Psoas muscle (tissue), 8 donors: ENCODE measurements at regions of chr1 and their contacts with region 1.

Region 1: DNA sequence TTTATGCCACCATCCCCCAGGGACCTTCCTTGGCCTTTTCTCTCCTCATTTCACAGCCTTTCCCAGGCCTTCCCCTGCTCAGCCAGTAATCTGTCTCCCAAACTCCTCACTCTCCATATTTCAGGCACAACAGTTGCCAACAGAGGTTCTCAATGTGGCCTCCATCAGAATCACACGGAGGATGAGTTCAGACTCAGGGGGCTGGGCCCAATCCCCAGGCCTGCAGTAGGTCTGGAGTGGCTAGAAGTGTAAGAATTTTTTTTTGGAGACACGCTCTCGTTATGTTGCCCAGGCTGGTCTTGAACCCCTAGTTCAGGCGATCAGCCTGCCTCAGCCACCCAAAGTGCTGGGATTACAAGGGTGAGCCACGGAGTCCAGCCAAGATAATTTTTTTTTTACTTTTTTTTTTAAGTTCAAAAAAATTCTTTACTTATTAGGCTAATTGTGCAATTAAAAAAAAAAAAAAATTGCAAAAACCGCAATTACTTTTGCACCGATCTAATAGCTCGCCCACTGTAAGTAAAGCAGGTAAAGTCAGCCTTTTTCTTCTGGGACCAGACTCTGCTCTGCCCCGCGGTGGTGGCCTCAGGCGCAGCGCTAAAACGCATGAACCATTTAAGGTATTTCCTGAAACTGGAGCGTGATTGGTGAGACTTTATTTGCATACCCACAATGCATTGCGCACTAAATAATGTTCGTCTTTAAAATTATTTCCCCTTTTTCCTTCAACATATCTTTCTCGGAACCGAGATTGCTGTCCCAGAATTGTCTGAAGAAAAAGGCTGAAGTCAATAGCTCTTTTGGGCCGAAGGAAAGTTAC is 18.7 kb downstream of the KIAA2013 start:
- DNase-seq: peak; percentile 89 to 96
- ATAC-seq: peak; percentile 82 to 90 (median 85)
- H3K4me3 ChIP-seq: peak overlapping the region; percentile 80
- H3K27ac ChIP-seq: peak overlapping the region; percentile 95
- H3K4me1 ChIP-seq: no peaks in the 10 kb centered on the region
- H3K27me3 ChIP-seq: no peaks in the 10 kb centered on the region
- CTCF ChIP-seq: peak; percentile 80

Region 2: GRCh38 chr1:11886986-11887665 is 20.4 kb before region 1 on chr1:
- intact Hi-C with region 1: loop called in 1 of 2 experiments (anchors 2 kb)
- DNase-seq: peak; percentile 51 to 76
- ATAC-seq: peak in 3 of 4 donors; percentile 33 to 66 (median 61)
- H3K4me3 ChIP-seq: no peak overlapping the region
- H3K27ac ChIP-seq: no peak overlapping the region
- H3K4me1 ChIP-seq: peaks cover 24% of the 10 kb centered on the region
- H3K27me3 ChIP-seq: no peaks in the 10 kb centered on the region
- CTCF ChIP-seq: no peak